Sigmoid colon (tissue), 7 donors: ENCODE measurements at regions of chr15 and their contacts with region 1.

Region 1: DNA sequence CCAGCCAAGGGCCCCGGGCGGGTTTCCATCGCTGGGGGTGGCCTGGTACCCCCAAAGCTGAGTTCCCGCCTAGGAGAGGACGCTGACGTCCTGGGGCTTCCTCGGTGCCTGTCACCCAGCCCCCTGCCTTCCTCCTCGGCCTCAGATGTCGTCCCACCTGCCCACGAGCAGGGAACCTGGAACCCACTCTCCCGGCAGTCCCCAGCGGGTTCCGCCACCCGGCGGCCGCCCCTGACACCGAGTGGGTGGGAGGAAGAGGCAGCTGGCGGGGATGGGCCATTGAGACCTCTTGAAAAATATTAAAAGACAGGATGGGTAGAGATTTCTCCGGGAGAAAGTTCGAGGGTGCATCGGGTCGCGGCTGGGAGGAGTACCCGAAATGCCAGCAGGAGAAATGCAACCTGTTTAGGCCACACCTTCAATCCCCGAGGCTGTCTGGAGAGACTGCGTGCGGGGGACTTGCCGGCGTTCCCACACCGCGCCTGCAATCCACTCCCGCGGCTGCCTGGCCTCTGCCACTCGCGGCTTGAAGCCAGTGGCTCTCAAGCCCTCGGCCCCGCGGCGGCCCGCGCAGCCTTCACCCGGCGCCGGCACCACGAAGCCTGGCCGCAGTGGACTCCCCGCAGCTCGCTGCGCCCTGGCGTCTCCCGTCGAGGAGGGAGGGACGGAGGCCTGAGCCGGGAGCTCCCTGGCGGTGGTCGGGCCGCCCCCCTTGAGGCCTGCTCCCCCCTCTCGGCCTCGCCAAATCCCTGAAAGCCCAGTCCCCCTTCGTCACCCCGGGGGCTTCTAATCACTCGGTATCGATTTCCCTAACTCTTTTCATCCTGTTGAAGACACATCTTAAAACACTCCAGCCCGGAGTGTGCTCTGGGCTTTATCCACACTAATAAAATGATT is 8.6 kb upstream of the NR2F2 start:
- DNase-seq: peak; percentile 72
- H3K4me3 ChIP-seq: peak overlapping the region; percentile 42 to 56 (median 52)
- H3K27ac ChIP-seq: peak overlapping the region; percentile 91 to 97 (median 94)
- H3K4me1 ChIP-seq: peaks cover 0 to 71% (median 44%) of the 10 kb centered on the region in 4 donors
- H3K27me3 ChIP-seq: no peaks in the 10 kb centered on the region
- CTCF ChIP-seq: peak in 1 of 4 experiments; percentile 19
- EP300 ChIP-seq: no peak
- POLR2A ChIP-seq: no peak

Region 2: DNA sequence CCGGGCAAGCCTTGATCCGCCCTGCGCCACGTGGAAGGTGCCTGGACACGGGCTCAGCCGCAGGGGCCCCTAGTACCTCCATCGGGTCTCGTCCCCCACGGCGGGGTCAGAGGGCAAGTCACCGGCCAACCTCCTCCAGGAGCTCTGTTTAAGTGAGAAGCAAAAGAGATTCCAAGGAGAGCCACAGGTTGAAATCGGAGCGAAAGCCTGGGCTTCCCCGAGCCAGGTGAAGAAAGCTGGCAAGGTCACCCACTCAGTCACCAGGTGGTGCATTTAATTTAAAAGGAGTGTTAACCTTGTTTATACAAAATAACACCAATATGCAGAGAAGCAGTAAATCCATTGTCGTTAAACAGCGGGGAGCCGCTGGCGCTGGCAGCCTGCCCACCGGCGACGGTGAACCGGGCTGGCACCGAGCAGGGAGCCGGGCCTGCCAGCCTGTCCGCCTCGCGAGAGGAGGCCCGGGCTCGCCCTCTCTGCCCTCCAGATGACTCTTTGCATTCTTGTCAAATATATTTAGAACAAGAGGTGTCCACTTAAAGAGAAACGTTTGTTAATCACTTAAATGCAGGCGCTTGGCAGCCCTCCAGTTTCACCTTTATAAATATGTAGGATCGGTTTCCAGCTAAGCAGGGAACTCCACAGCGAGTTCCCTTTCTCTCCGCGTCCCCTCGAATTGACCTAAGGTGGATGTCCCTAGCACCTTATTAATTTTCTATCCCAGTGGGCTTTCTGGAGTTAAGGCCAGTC is 268.7 kb before region 1 on chr15:
- intact Hi-C with region 1: loop called (anchors 5 kb)
- DNase-seq: peak; percentile 60
- H3K4me3 ChIP-seq: peak overlapping the region; percentile 5 to 43 (median 32)
- H3K27ac ChIP-seq: peak overlapping the region in 3 of 4 donors; percentile 9 to 55 (median 12)
- H3K4me1 ChIP-seq: peaks cover 0 to 19% (median 16%) of the 10 kb centered on the region in 4 donors
- H3K27me3 ChIP-seq: no peaks in the 10 kb centered on the region
- CTCF ChIP-seq: no peak
- EP300 ChIP-seq: no peak
- POLR2A ChIP-seq: no peak

Region 3: DNA sequence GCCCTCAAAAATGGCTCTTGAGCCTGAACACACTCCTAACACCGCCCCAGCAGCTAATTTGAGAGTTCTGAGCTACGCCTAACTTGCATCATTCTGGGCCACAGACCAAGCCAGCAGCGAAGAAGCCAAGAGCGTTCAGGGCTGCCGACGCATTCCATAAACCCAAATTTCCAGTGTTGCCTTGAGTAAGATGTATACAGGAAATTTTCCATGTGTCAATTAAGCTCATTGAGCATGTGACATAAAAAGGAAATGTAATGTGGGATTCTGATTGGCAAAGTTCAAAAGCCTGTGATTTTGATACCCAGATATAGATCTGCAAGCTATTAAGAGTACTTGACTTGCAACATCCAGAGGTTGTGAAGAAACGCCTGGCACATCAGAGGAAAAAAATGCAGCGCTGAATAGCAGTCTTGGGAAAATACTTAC is 140.0 kb before region 1 on chr15:
- intact Hi-C with region 1: loop called (anchors 5 kb)
- DNase-seq: peak; percentile 85
- H3K4me3 ChIP-seq: no peak overlapping the region
- H3K27ac ChIP-seq: peak overlapping the region; percentile 59 to 71 (median 68)
- H3K4me1 ChIP-seq: peaks cover 0 to 27% (median 14%) of the 10 kb centered on the region in 4 donors
- H3K27me3 ChIP-seq: no peaks in the 10 kb centered on the region
- CTCF ChIP-seq: no peak
- EP300 ChIP-seq: no peak
- POLR2A ChIP-seq: no peak

Region 4: DNA sequence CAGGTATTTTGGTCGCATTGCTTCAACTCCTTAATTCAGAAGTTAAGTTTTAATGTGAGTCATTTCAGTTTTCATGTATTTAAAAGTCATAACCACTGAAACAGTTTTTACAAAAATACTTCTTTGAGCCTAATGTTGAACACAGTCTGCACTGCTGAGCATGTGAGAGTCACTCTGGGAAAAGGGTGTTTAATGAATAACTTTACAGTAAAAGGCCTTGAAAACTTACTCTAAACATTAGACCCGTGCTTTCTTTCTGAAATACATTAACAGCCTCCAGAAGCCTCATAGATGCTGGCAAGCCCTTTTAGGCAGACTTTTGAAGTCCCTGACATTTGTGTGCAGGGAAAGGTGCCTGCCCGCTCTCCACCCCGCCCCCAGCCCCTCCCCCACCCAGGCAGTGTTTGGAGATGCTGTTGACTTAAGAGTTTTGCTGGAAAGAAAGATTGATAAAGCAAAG is 60.3 kb before region 1 on chr15:
- intact Hi-C with region 1: loop called (anchors 5 kb)
- DNase-seq: no peak
- H3K4me3 ChIP-seq: no peak overlapping the region
- H3K27ac ChIP-seq: peak overlapping the region; percentile 47 to 72 (median 57)
- H3K4me1 ChIP-seq: peaks cover 0 to 26% (median 21%) of the 10 kb centered on the region in 4 donors
- H3K27me3 ChIP-seq: no peaks in the 10 kb centered on the region
- CTCF ChIP-seq: no peak
- EP300 ChIP-seq: no peak
- POLR2A ChIP-seq: no peak